Ascending aorta (tissue), 2 donors: ENCODE measurements at regions of chrX and their contacts with region 1.

Region 1: GRCh38 chrX:111098874-111099273 is 2.9 kb downstream of the PAK3 start:
- DNase-seq: peak in 1 of 2 donors; percentile 65
- H3K4me3 ChIP-seq: peak overlapping the region in 1 of 2 donors; percentile 76
- H3K27ac ChIP-seq: peak overlapping the region in 1 of 2 donors; percentile 48
- H3K4me1 ChIP-seq: no peaks in the 10 kb centered on the region
- H3K27me3 ChIP-seq: no peaks in the 10 kb centered on the region
- CTCF ChIP-seq: peak; percentile 51 to 80 (median 68)

Region 2: GRCh38 chrX:110412971-110413721 is 685.7 kb before region 1 on chrX:
- intact Hi-C with region 1: loop called (anchors 5 kb)
- DNase-seq: peak in 1 of 2 donors; percentile 77
- H3K4me3 ChIP-seq: no peak overlapping the region
- H3K27ac ChIP-seq: peak overlapping the region; percentile 48 to 71
- H3K4me1 ChIP-seq: peaks cover 0 to 7% of the 10 kb centered on the region in 2 donors
- H3K27me3 ChIP-seq: no peaks in the 10 kb centered on the region
- CTCF ChIP-seq: peak; percentile 74 to 88 (median 79)

Region 3: DNA sequence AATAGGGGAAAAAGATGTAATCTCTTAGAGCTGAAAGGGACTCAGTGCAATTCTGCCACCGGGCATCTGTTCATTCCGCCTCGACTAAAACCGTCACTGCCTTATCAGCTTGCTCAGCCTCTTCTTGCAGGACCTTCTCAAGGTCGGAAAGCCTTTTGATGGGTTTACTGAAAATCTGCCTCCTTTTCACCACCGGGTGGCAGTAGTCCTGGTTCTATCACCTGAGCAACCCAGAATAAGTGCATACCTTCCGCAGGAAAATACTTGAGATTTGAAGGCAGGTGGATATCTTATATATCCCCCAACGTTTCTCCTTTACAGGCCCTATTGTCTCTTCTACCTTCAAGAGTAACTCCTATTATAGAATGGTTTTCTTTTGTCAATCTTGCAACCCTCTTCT is 106.3 kb before region 1 on chrX:
- intact Hi-C with region 1: loop called (anchors 5 kb)
- DNase-seq: no peak
- H3K4me3 ChIP-seq: no peak overlapping the region
- H3K27ac ChIP-seq: no peak overlapping the region
- H3K4me1 ChIP-seq: no peaks in the 10 kb centered on the region
- H3K27me3 ChIP-seq: no peaks in the 10 kb centered on the region
- CTCF ChIP-seq: peak in 2 of 3 experiments; percentile 35 to 44

Region 4: DNA sequence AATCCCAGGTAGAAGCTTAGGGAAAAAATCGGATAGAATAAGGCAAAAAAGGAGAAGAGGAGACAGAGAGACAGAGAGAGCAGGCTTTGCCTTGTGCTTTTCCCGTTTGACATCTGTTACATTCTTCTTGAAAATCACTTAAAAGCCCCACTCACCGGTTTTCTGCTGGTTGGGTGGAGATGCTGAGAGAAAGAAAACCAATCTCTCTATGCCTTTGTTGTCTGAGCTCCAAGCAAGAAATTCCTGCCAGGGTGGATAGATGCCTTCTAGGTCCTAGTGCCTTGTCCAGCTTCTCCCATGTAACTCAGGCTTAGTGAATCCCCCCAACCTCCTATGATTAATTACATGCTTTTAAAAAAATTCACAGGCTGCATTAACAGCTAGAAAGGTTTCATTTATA is 313.1 kb after region 1 on chrX and contains the start of gene DCX:
- intact Hi-C with region 1: no loop called
- DNase-seq: no peak
- H3K4me3 ChIP-seq: no peak within 1 kb of the TSS
- H3K27ac ChIP-seq: no peak within 1 kb of the TSS
- H3K4me1 ChIP-seq: no peaks in the 10 kb centered on the region
- H3K27me3 ChIP-seq: no peaks in the 10 kb centered on the region
- CTCF ChIP-seq: no peak
- total RNA-seq, gene DCX: not detected

Region 5: DNA sequence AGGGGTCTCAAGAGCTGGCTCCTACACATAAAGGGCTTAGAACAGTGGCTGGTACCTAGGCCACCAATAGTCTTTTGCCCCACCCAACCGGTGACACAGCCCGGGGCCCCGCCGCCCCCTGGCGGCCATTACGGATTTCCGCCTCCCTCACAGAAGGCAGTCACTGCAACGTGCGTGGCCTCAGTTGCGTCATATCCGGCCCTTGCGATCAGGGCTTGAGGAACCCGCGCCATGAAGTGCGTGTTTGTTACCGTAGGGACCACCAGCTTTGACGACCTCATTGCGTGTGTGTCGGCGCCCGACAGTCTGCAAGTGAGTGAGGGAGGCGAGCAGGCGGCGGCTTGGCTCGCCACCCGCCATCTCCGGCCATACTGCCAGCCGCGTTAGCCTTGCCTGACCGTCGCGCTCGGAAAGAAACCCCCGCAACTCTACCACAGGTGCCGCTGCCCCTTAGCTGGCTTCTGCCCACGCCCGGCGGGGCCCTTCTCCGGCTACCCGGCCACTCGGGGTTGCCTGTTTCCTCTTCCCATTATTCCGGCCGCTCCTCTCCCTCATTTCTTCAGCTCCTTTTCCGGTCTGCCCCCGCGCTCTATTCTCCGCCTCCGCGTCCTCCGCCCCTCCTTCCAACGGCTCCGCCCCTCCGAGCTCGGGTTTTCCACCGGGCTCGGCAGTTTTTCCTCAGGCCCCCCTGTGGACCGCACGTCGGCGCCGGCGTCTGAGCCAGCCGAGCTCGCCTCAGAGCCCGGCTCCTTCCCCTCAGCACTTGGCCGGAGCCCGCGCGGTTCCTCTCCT is 582.3 kb after region 1 on chrX and contains the start of gene ALG13:
- intact Hi-C with region 1: loop called (anchors 5 kb)
- DNase-seq: peak; percentile 67 to 93
- H3K4me3 ChIP-seq: peak within 1 kb of the TSS; percentile 78
- H3K27ac ChIP-seq: peak within 1 kb of the TSS; percentile 97 to 98
- H3K4me1 ChIP-seq: no peaks in the 10 kb centered on the region
- H3K27me3 ChIP-seq: no peaks in the 10 kb centered on the region
- CTCF ChIP-seq: peak; percentile 56 to 68 (median 64)
- total RNA-seq, gene ALG13: 21.1 TPM